ENCODE measurements at regions of chr1 and their contacts with region 1.

Region 1: DNA sequence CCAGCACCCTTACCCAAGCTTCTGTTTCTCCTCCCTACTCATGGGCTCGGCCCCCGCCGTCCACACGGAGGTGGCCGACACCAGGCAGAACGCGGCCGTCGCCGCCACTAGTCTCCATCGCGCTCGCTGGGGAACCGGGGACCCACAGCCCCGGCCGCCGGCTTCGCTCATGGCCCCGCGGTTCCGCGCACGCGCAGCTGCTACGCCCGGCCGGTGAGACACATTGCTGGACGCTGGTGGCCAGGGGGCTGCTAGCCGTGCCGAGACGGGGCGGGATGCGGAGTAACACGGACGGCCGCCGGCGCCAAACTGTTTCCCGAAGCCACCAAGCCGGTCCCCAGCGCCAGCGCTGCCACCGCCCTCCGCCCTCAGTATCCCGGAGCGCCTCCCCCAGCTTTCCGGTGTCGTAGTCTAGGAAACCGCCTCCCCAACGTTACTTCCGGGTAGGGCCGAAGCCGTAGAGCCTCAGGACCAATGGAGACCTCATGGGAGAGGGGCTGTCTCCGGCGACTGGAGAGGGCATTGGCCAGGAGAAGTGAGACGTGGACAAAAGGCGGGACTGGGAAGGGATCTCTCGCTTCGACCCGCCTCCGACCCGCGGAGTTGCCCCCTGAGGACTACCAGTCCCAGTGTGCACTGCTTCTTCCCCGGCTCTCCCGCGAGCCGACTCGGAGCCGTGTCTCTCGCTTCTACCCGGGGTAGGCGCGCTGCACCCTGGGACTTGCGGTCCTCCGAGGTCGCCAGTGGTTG is at the start of gene EDEM3:
- DNase-seq: peak; percentile 99
- H3K4me3 Mint-ChIP-seq: peak within 1 kb of the TSS; percentile 93
- H3K27ac Mint-ChIP-seq: peak within 1 kb of the TSS; percentile 93
- H3K4me1 Mint-ChIP-seq: peaks cover 38% of the 10 kb centered on the region
- H3K27me3 Mint-ChIP-seq: peaks cover 2% of the 10 kb centered on the region
- total RNA-seq, gene EDEM3: 14.5 to 15.2 TPM

Region 2: GRCh38 chr1:184494929-184495328 is 259.7 kb before region 1 on chr1:
- CTCF ChIA-PET with region 1: no interaction called
- POLR2A ChIA-PET with region 1: interaction called, 3 read pairs
- intact Hi-C with region 1: loop called (anchors 10 kb)
- DNase-seq: no peak
- H3K4me3 Mint-ChIP-seq: no peak overlapping the region
- H3K27ac Mint-ChIP-seq: no peak overlapping the region
- H3K4me1 Mint-ChIP-seq: peaks cover 11% of the 10 kb centered on the region
- H3K27me3 Mint-ChIP-seq: no peaks in the 10 kb centered on the region

Region 3: DNA sequence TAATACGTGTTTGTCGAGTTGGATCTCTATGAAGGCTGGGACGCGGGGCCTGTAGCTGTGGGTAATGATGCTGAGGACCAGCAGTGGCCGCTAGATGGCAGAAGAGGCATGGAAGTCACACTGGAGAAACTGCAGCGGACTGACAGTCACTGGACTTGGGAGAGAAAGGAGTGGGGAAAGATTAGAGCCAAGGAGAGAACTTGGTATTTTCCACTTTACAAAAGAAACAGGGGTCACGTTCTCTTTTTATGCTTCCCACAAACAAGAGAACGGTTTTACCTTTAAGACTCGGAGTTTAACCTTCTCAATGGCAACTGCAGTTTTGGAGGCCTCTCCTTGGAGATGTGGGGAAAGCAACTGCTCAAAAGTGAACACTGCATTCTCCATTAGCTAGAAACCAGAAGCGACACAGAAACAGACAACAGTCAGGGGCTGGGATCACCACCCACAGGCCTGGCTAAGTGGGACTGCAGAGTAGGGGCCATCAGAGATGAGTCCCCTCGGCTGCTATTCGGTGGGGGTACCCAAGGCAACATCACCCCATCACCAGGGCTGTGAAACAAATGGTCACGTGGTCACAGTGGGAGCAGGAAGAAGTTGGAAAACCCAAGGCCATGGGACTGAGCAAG is 51.1 kb after region 1 on chr1:
- CTCF ChIA-PET with region 1: interaction called, 13 read pairs
- POLR2A ChIA-PET with region 1: no interaction called
- intact Hi-C with region 1: no loop called
- DNase-seq: peak; percentile 88
- H3K4me3 Mint-ChIP-seq: no peak overlapping the region
- H3K27ac Mint-ChIP-seq: no peak overlapping the region
- H3K4me1 Mint-ChIP-seq: peaks cover 6% of the 10 kb centered on the region
- H3K27me3 Mint-ChIP-seq: no peaks in the 10 kb centered on the region

Region 4: GRCh38 chr1:184892116-184892515 is 137.5 kb after region 1 on chr1:
- CTCF ChIA-PET with region 1: no interaction called
- POLR2A ChIA-PET with region 1: interaction called, 3 read pairs
- intact Hi-C with region 1: loop called (anchors 1 kb)
- DNase-seq: peak; percentile 53
- H3K4me3 Mint-ChIP-seq: no peak overlapping the region
- H3K27ac Mint-ChIP-seq: peak overlapping the region; percentile 76
- H3K4me1 Mint-ChIP-seq: peaks cover 58% of the 10 kb centered on the region
- H3K27me3 Mint-ChIP-seq: peaks cover 1% of the 10 kb centered on the region

Region 5: GRCh38 chr1:185044981-185045813 is 290.5 kb after region 1 on chr1 and contains the start of gene RNF2:
- CTCF ChIA-PET with region 1: no interaction called
- POLR2A ChIA-PET with region 1: interaction called, 4 read pairs
- intact Hi-C with region 1: loop called (anchors 1 kb)
- DNase-seq: peak; percentile 85
- H3K4me3 Mint-ChIP-seq: peak within 1 kb of the TSS; percentile 90
- H3K27ac Mint-ChIP-seq: peak within 1 kb of the TSS; percentile 72
- H3K4me1 Mint-ChIP-seq: peaks cover 39% of the 10 kb centered on the region
- H3K27me3 Mint-ChIP-seq: no peaks in the 10 kb centered on the region
- total RNA-seq, gene RNF2: 20.7 to 21.2 TPM

Region 6: DNA sequence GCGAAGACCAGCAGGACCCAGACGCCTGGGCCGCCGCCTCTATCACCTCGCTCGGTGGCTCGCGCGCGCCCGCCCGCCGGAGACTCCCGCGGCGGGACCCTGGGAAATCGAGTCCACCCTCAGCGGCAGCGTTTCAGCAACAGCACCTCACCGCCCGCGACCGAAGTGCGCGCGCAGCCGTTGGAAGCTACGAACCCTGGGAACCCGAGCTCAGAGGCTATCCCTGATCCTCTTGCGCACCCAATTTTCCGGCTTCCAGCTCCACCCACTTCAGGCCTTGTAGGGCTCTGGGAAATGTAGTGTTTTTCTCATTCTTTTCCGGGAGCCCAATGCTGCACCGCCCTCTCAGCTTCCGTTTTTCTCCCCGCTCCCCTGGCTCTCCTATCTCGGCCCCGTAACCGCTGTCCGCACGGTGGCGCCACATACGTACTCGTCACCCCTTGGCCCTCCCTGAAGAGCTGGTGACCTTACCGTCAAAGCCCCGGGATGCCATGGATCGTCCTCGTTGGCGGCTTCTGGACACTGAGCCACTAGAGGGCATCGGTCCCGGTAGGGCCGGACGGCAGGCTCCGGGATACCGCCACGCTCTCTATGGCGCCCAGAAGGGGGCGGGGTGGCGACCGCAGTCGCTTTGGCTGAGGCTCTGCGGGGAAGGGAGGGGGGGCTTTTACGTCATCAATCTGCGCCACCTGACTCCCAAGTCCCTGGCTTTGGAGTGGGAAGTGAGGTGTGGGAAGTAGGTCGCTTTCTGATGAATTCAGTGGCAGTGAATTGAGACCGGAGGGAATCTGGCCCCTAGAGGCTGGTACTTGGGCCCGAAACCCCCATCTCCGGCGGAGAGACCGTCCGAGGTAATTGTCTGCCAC is 1620.7 kb after region 1 on chr1 and contains the starts of genes ODR4 and TPR:
- CTCF ChIA-PET with region 1: no interaction called
- POLR2A ChIA-PET with region 1: no interaction called
- intact Hi-C with region 1: loop called (anchors 1 kb)
- DNase-seq: peak; percentile 98
- H3K4me3 Mint-ChIP-seq: peak within 1 kb of the TSS; percentile 93
- H3K27ac Mint-ChIP-seq: peak within 1 kb of the TSS; percentile 97
- H3K4me1 Mint-ChIP-seq: peaks cover 43% of the 10 kb centered on the region
- H3K27me3 Mint-ChIP-seq: no peaks in the 10 kb centered on the region
- total RNA-seq, gene ODR4: 11.5 to 12.0 TPM
- total RNA-seq, gene TPR: 130 to 131 TPM

Measured in activated CD4-positive, alpha-beta memory T cell treated with anti-CD3 and anti-CD28 coated beads for 36 hours (primary cell).